ENCODE measurements at regions of chr19 and their contacts with region 1.

Region 1: GRCh38 chr19:41144403-41144802 is 30.2 kb downstream of the CYP2F1 start:
- DNase-seq: peak; percentile 58 to 82 (median 79)
- ATAC-seq: peak; percentile 74 to 98 (median 86)
- H3K4me3 ChIP-seq: no peak overlapping the region
- H3K27ac ChIP-seq: no peak overlapping the region
- H3K4me1 ChIP-seq: no peaks in the 10 kb centered on the region
- H3K27me3 ChIP-seq: peaks cover 0 to 13% (median 1%) of the 10 kb centered on the region in 4 donors
- CTCF ChIP-seq: peak; percentile 63 to 67 (median 65)

Region 2: DNA sequence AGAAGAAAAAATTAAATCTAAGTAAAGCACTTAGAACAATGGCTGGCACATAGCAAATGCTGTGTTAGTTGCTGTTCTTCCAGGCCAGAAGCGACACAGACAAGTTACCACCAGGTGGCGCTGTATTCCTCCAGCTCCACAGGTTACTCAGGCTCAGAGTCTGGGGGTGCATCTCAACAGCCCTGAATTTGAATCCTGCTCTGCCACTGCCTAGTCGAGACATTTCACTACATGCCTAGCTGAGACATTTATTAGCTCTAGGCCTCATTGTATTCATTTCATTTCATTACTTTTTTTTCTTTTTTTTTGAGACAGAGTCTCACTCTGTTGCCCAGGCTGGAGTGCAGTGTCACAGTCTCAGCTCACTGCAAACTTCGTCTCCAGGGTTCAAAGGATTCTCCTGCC is 169.8 kb before region 1 on chr19:
- intact Hi-C with region 1: loop called in 1 of 3 experiments (anchors 10 kb)
- DNase-seq: peak; percentile 42 to 77 (median 69)
- ATAC-seq: peak; percentile 71 to 92 (median 85)
- H3K4me3 ChIP-seq: no peak overlapping the region
- H3K27ac ChIP-seq: no peak overlapping the region
- H3K4me1 ChIP-seq: no peaks in the 10 kb centered on the region
- H3K27me3 ChIP-seq: no peaks in the 10 kb centered on the region
- CTCF ChIP-seq: peak; percentile 87 to 96 (median 88)

Region 3: DNA sequence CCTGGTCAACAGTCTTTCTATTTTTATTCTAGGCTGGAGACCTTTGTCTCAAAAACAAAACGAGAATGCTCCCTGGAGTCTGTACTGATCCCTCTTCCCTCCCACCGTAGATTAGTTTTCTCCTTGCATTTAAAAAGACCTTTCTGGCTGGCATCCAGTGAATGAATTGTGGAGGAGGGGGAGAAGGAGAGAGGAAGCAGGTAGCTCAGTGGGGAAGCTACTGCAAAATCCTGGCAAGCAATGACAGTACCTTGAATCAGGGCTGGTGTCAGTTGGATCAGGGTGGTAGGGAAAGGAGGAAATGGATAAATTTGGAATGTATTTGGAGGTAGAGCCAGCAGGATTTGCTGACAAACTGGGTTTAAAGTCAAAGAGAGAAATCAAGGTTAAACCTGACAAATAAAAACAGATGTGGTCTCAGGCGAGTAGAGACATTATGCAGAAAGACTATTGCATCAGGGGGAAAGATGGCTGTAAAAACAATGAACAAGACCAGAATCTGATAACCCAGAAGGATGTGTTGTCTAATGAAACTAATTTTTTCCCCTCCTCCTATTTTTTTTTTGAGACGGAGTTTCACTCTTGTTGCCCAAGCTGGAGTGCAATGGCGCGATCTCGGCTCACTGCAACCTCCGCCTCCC is 45.1 kb after region 1 on chr19:
- intact Hi-C with region 1: no loop called
- DNase-seq: no peak
- ATAC-seq: no peak
- H3K4me3 ChIP-seq: no peak overlapping the region
- H3K27ac ChIP-seq: no peak overlapping the region
- H3K4me1 ChIP-seq: no peaks in the 10 kb centered on the region
- H3K27me3 ChIP-seq: peaks cover 0 to 12% (median 0%) of the 10 kb centered on the region in 4 donors
- CTCF ChIP-seq: no peak

Region 4: DNA sequence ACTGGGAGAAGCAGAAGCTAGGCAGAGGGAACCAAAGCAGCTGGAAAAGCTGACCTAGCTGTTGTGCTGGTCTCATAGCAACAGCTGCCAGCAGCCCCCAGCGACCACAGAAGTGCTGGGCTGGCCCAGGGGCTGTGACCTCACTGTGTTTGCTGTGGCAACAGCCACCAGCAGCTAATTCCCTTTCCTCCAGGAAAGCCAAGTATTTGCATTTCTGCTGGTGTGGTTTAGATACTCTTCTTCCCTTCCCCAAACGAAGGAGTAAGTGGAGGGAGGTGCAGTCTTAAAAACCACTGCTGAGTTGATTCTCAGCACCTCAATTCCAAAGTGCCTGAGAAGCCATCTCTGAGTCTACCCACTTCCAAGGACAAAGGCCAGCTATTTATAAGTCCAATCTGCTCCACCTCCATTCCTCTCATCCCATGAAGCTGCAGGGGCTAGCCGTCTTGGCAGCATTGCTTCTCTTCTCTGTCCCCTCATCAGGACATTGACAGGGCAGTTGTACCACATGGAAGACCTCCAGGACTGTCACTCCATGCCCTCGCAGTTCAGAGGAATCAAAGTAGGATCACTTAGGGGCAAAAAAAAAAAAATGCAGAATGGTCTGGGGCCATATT is 154.1 kb after region 1 on chr19:
- intact Hi-C with region 1: no loop called
- DNase-seq: peak in 3 of 6 donors; percentile 59 to 71 (median 62)
- ATAC-seq: peak in 3 of 4 donors; percentile 77 to 90 (median 82)
- H3K4me3 ChIP-seq: no peak overlapping the region
- H3K27ac ChIP-seq: peak overlapping the region in 3 of 4 donors; percentile 40 to 67 (median 50)
- H3K4me1 ChIP-seq: peaks cover 0 to 12% (median 0%) of the 10 kb centered on the region in 3 donors
- H3K27me3 ChIP-seq: no peaks in the 10 kb centered on the region
- CTCF ChIP-seq: no peak

Measured in pancreas (tissue), 10 donors.